T-cell (primary cell): ENCODE measurements at regions of chr7 and their contacts with region 1.

Region 1: GRCh38 chr7:128940494-128941322 is 3.0 kb downstream of the IRF5 start:
- DNase-seq: peak in 6 of 35 experiments; percentile 6 to 58 (median 20)
- ATAC-seq: peak; percentile 21 to 43 (median 32)
- H3K4me3 ChIP-seq: peak overlapping the region in 1 of 2 donors; percentile 18
- H3K4me3 Mint-ChIP-seq: peak overlapping the region; percentile 79 to 94 (median 87)
- H3K27ac ChIP-seq: peak overlapping the region; percentile 54
- H3K27ac Mint-ChIP-seq: peak overlapping the region; percentile 77 to 85
- H3K4me1 ChIP-seq: peaks cover 0 to 39% of the 10 kb centered on the region in 2 experiments
- H3K4me1 Mint-ChIP-seq: peaks cover 31 to 37% (median 34%) of the 10 kb centered on the region in 3 donors
- H3K27me3 ChIP-seq: peaks cover 0 to 38% of the 10 kb centered on the region in 2 experiments
- H3K27me3 Mint-ChIP-seq: peaks cover 12% of the 10 kb centered on the region in 2 donors

Region 2: DNA sequence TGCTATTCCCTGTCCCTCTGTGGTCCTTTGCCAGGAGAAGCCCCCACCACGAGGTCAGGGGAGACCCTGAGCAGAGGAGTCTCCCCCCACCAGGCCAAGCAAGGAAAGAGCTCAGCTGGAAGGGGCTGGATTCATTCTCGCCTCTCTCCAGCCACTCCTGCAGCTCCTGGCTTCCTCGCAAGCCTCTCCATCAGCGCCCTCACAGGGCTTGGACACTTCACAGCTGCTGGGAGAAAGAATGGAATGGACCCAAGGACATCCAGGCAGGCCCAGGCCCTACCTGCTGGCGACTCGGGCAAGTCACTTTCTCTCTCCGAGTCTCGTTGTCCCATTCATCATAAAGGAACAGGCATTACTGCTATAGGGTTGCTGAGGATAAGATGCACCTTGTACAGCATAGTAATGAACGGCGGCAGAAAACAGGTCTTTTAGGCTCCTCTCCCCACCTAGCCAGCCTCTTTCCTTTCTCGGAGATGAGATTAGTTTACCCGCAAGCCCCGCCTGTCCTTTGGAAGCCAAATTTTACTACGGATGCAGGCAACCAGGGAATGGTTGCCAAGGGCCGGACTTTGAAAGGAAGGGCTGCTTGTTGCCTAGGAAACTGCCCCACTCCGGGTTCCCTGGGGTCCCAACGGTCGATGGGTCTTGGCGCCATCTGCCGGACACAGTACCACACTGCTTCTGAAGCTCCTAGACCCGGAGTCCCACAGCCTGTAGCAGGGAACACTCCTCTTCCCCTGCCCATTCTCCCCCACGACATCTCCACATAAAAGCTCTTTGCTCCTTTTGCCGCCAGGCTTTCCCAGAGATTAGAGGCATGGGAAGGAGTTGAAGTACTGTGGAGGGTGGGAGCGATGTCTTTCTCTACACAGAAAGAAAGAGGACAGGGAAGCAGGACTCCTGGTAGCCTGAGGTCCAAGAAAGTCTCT is 553.2 kb before region 1 on chr7:
- CTCF ChIA-PET with region 1: no interaction called
- POLR2A ChIA-PET with region 1: no interaction called
- DNase-seq: peak in 33 of 35 experiments; percentile 12 to 79 (median 53)
- ATAC-seq: peak; percentile 68 to 82 (median 80)
- H3K4me3 ChIP-seq: no peak overlapping the region
- H3K4me3 Mint-ChIP-seq: no peak overlapping the region
- H3K27ac ChIP-seq: no peak overlapping the region
- H3K27ac Mint-ChIP-seq: no peak overlapping the region
- H3K4me1 ChIP-seq: peaks cover 0 to 8% of the 10 kb centered on the region in 2 experiments
- H3K4me1 Mint-ChIP-seq: peaks cover 0 to 6% (median 0%) of the 10 kb centered on the region in 3 donors
- H3K27me3 ChIP-seq: peaks cover 0 to 16% of the 10 kb centered on the region in 2 experiments
- H3K27me3 Mint-ChIP-seq: peaks cover 0 to 5% of the 10 kb centered on the region in 2 donors

Region 3: DNA sequence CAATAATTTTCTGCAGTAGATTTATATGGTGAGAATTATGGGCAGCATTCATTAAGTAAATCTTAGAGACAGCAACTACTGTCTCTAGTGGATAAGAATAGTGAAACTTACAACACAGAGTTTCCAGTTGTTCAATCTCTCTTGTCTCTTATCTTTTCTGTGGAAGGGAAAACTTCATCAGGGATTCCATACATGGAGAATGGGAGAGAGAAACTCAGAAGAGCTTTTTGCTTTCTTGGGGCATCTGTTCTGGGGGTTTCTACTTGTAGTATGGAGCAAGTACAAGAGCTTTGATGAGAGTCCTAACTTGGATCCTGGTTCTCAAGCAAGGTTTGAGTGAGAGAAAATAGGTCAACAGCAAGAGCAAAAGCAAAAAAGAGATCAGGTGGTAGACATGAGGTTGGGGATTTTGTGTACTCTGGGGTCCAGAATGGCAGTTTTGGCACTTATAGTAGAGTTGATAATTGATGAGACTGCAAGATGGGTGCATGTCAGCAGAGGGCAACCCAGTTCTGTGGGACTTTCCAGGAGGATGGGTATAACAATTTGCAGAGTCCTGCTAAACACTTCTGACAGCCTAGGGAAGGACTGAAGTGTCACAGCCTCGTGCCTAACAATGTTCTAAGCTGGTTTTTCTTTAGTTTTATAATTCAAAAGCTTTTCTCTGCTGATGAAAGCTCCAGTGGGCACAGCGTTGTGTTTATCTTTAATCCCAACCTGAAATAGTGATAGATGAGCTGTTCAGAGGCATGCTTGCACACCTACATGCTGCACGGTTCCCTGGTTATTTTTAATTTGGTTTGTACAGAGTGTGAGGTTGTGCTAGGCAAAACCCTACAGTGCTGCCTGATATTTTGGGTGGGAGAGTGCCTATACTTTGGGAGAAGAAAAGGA is 461.5 kb after region 1 on chr7:
- CTCF ChIA-PET with region 1: no interaction called
- POLR2A ChIA-PET with region 1: interaction called in 1 of 2 experiments, 18 read pairs
- DNase-seq: peak in 3 of 35 experiments; percentile 0 to 28 (median 2)
- ATAC-seq: no peak
- H3K4me3 ChIP-seq: no peak overlapping the region
- H3K4me3 Mint-ChIP-seq: no peak overlapping the region
- H3K27ac ChIP-seq: no peak overlapping the region
- H3K27ac Mint-ChIP-seq: no peak overlapping the region
- H3K4me1 ChIP-seq: no peaks in the 10 kb centered on the region
- H3K4me1 Mint-ChIP-seq: no peaks in the 10 kb centered on the region
- H3K27me3 ChIP-seq: no peaks in the 10 kb centered on the region
- H3K27me3 Mint-ChIP-seq: no peaks in the 10 kb centered on the region